MCF 10A (cell line): ENCODE measurements at regions of chr16 and their contacts with region 1.

Region 1: DNA sequence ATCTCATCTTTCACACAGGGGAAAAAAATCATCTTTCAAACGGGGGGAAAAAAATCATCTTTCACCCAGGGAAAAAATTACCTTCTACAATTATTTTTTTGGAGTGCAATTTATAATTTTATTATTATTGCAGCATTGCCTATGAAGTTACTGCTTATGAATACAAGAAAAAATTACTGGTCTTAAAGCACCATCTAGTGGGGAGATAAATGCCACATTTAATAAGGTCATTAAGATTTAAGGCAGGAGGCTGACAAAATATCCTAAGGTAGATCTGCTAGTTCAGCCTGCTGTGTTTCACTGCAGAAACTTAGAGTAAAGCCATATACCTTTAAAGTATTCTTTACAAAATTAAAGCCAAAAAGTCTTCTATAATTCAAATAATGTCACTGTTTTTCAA is 13.7 kb downstream of the SHCBP1 start:
- DNase-seq: peak; percentile 49
- H3K4me3 Mint-ChIP-seq: no peak overlapping the region
- H3K27ac Mint-ChIP-seq: no peak overlapping the region
- H3K4me1 Mint-ChIP-seq: no peaks in the 10 kb centered on the region
- H3K27me3 Mint-ChIP-seq: no peaks in the 10 kb centered on the region
- CTCF ChIP-seq: peak; percentile 26

Region 2: GRCh38 chr16:46555951-46556350 is 51.6 kb before region 1 on chr16:
- CTCF ChIA-PET with region 1: interaction called, 189 read pairs
- POLR2A ChIA-PET with region 1: no interaction called
- intact Hi-C with region 1: loop called (anchors 1 kb)
- DNase-seq: no peak
- H3K4me3 Mint-ChIP-seq: no peak overlapping the region
- H3K27ac Mint-ChIP-seq: no peak overlapping the region
- H3K4me1 Mint-ChIP-seq: no peaks in the 10 kb centered on the region
- H3K27me3 Mint-ChIP-seq: no peaks in the 10 kb centered on the region
- CTCF ChIP-seq: no peak

Region 3: DNA sequence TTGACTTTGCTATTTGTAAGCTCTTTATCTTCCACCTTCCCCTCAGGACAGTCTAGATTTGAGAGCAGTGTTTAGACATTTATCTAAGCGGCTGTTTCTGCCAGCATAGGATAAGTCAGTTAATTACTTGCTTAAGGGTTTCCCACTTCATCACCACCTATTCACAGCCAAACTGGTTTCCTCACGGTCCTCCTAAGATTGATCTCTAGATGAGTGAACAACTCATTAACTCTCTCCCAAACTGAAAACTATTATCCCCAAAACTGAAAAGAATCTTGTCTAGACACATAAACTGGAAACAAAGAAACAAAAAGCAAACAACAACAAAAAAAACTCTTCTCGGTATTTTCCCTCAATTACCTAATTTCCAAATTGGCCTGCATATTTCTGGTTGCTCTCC is 44.5 kb before region 1 on chr16:
- CTCF ChIA-PET with region 1: interaction called, 189 read pairs
- POLR2A ChIA-PET with region 1: no interaction called
- intact Hi-C with region 1: no loop called
- DNase-seq: no peak
- H3K4me3 Mint-ChIP-seq: no peak overlapping the region
- H3K27ac Mint-ChIP-seq: no peak overlapping the region
- H3K4me1 Mint-ChIP-seq: no peaks in the 10 kb centered on the region
- H3K27me3 Mint-ChIP-seq: no peaks in the 10 kb centered on the region
- CTCF ChIP-seq: no peak

Region 4: DNA sequence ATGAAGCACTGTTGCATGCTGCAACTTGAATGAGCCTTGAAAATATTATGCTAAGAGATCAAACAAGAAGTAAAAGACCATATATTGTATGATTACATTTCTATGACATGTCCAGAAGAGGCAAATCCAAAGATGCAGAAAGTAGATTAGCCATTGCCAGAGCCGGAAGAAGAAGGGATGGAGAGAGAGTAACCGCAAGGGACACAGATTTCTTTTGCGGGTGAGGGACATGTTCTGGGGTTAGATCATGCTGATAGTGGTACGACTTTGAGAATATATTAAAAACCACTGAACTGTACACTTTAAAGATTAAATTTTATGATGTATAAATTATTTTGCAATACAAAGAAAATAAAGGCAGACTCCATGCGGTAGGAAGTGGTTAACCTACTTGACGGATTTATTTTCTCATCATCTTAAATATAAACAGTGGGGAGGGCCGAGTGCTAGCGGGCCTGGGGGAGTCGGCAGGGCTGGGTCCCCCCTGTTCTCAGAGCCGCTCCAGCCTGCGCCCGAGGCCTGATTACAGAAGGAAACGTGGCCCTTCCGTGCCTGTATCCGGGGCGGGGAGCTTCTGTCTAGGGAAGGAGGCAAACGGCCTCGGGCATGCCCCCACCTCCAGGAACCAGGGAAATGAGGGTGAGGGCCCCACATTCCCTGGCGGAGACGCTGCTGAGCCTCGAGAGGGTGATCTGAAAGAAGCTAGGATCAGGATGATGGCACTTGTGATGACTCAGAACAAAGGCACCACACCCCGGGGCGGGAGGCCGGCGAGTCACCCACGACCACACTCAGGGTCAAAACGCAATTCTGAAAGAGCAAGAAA is 34.3 kb before region 1 on chr16:
- CTCF ChIA-PET with region 1: interaction called, 13 read pairs
- POLR2A ChIA-PET with region 1: no interaction called
- intact Hi-C with region 1: no loop called
- DNase-seq: peak; percentile 56
- H3K4me3 Mint-ChIP-seq: peak overlapping the region; percentile 45
- H3K27ac Mint-ChIP-seq: peak overlapping the region; percentile 79
- H3K4me1 Mint-ChIP-seq: peaks cover 6% of the 10 kb centered on the region
- H3K27me3 Mint-ChIP-seq: no peaks in the 10 kb centered on the region
- CTCF ChIP-seq: no peak

Region 5: DNA sequence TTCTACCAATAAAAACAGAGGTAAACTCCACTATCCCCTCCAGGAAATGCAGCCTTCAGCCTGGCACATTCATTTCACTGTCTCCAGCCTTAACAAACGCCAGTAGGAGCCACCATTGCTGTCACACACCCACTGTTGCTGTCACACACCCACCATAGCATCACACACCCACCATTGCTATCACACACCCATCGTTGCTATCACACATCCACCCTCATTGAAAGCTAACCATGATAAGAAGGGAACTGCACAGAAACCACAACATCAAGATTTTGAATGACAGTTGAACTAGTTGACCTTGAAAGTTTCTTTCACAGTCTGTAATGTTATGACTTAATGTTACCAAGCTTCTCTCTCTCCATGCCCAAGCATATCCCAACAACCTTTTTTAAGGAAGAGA is 24.5 kb before region 1 on chr16:
- CTCF ChIA-PET with region 1: interaction called, 23 read pairs
- POLR2A ChIA-PET with region 1: no interaction called
- intact Hi-C with region 1: no loop called
- DNase-seq: no peak
- H3K4me3 Mint-ChIP-seq: no peak overlapping the region
- H3K27ac Mint-ChIP-seq: no peak overlapping the region
- H3K4me1 Mint-ChIP-seq: peaks cover 5% of the 10 kb centered on the region
- H3K27me3 Mint-ChIP-seq: no peaks in the 10 kb centered on the region
- CTCF ChIP-seq: no peak

Region 6: GRCh38 chr16:46591257-46591656 is 16.3 kb before region 1 on chr16:
- CTCF ChIA-PET with region 1: interaction called, 12 read pairs
- POLR2A ChIA-PET with region 1: interaction called, 7 read pairs
- intact Hi-C with region 1: no loop called
- DNase-seq: no peak
- H3K4me3 Mint-ChIP-seq: no peak overlapping the region
- H3K27ac Mint-ChIP-seq: peak overlapping the region; percentile 80
- H3K4me1 Mint-ChIP-seq: peaks cover 7% of the 10 kb centered on the region
- H3K27me3 Mint-ChIP-seq: no peaks in the 10 kb centered on the region
- CTCF ChIP-seq: no peak

Region 7: DNA sequence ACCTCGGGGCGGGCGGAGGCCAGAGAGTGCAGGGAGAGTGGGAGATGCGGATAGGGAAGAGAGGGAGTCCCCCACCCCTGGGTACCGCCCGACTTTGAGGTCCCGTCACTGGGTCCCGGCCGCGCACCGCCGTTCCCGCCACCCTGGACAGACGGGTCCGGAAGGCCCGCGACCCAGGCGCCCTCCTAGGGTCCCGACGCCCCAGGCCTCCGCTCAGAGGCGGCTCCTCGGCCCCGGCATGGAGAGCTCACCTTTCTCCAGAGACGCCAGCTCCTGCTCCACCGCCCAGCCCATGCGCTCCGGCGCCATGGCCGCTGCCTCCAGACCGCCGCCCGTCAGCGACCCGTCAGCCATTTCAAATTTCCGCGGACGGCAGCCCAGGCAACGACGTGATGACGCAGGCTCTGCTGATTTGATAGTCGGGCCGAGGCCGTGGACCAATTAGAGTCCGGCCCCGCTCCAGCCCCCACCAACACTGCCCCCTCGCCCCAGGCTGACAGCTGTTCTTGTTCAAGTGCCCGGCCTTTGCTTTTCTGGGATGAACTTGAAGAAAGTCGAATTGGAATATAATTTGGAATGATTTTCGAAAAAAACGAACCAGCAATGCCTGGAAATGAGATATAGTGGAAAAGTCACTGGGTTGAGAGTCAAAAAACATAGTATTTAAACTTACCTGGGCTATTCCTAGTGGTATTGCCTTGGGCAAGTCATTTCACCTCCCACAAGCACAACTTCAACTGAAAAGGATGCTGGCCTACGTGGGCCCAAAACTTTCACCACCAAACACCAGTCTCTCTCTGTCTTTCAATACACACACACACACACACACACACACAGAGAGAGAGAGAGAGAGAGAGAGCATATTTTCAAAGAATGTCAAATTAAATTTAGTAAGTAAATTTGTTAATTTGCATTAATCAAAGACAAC is 13.7 kb after region 1 on chr16 and contains the start of gene SHCBP1:
- CTCF ChIA-PET with region 1: interaction called, 46 read pairs
- POLR2A ChIA-PET with region 1: interaction called, 3 read pairs
- intact Hi-C with region 1: no loop called
- DNase-seq: peak; percentile 87
- H3K4me3 Mint-ChIP-seq: peak within 1 kb of the TSS; percentile 92
- H3K27ac Mint-ChIP-seq: peak within 1 kb of the TSS; percentile 67
- H3K4me1 Mint-ChIP-seq: peaks cover 17% of the 10 kb centered on the region
- H3K27me3 Mint-ChIP-seq: no peaks in the 10 kb centered on the region
- CTCF ChIP-seq: no peak
- total RNA-seq, gene SHCBP1: 17.2 and 21.4 TPM in 2 replicates